Activated CD4-positive, alpha-beta T cell treated with anti-CD3 and anti-CD28 coated beads, Interleukin-2, amount 10 ng/mL, durations not matched to agents 24 days and 14 days (primary cell): ENCODE measurements at regions of chr12 and their contacts with region 1.

Region 1: GRCh38 chr12:2812290-2813213 is at the start of gene ITFG2:
- DNase-seq: peak; percentile 99
- H3K4me3 Mint-ChIP-seq: peak within 1 kb of the TSS; percentile 100
- H3K27ac Mint-ChIP-seq: peak within 1 kb of the TSS; percentile 100
- H3K4me1 Mint-ChIP-seq: peaks cover 21% of the 10 kb centered on the region
- H3K27me3 Mint-ChIP-seq: no peaks in the 10 kb centered on the region
- total RNA-seq, gene ITFG2: 36.5 and 43.8 TPM in 2 replicates

Region 2: DNA sequence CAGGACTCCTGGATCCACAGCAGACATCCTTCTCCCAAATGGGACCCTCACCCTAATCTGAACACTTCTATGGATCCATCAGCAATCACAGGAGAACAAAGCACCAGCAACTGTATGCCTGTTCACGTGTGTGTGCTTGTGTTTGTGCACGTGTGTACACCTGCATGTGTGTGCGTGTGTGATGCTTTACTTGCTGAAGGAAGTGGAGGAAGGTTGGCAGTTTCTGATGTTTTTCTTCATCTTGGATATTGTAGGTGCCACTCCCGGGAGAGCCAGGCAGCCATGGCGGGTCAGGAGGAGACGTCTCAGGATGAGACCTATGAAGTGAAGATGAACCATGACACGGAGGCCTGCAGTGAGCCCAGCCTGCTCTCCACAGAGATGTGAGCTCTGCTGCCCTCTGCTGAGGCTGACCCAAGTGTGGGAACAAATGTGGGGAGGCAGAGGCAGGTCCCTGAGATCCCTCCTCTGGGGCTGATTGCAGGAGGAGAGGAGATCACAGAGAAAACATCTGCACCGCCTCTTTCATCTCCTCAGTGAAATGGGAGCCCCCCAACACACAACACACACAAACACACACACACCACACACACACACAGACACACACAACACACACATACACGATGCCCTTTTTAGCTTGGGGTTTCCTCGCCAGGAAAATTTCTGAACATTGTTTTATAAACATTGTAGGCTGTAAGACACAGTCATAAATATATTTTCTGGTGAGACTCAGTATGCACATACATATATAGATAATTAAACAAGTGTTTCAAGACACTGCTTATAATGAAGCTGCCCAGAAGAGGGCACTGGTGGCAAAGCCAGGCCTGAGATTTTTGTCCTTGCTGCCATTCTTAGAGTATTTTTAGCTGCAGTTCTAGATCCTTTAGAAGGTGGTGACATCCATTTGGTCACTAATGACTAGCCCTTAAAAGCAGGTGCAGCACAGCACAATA is 130.0 kb before region 1 on chr12:
- intact Hi-C with region 1: loop called (anchors 2 kb)
- DNase-seq: peak; percentile 86
- H3K4me3 Mint-ChIP-seq: no peak overlapping the region
- H3K27ac Mint-ChIP-seq: peak overlapping the region; percentile 66
- H3K4me1 Mint-ChIP-seq: peaks cover 2% of the 10 kb centered on the region
- H3K27me3 Mint-ChIP-seq: no peaks in the 10 kb centered on the region

Region 3: GRCh38 chr12:2794736-2795289 is 17.7 kb before region 1 on chr12 and contains the start of gene FKBP4:
- intact Hi-C with region 1: loop called (anchors 1 kb)
- DNase-seq: peak; percentile 97
- H3K4me3 Mint-ChIP-seq: peak within 1 kb of the TSS; percentile 86
- H3K27ac Mint-ChIP-seq: peak within 1 kb of the TSS; percentile 79
- H3K4me1 Mint-ChIP-seq: peaks cover 28% of the 10 kb centered on the region
- H3K27me3 Mint-ChIP-seq: peaks cover 19% of the 10 kb centered on the region
- total RNA-seq, gene FKBP4: 300 and 311 TPM in 2 replicates

Region 4: GRCh38 chr12:2826721-2827515 is 14.4 kb after region 1 on chr12:
- intact Hi-C with region 1: no loop called
- DNase-seq: no peak
- H3K4me3 Mint-ChIP-seq: no peak overlapping the region
- H3K27ac Mint-ChIP-seq: no peak overlapping the region
- H3K4me1 Mint-ChIP-seq: peaks cover 2% of the 10 kb centered on the region
- H3K27me3 Mint-ChIP-seq: no peaks in the 10 kb centered on the region

Region 5: GRCh38 chr12:2877047-2877952 is 64.7 kb after region 1 on chr12 and contains the starts of genes FOXM1 and RHNO1:
- intact Hi-C with region 1: loop called (anchors 1 kb)
- DNase-seq: peak; percentile 97
- H3K4me3 Mint-ChIP-seq: peak within 1 kb of the TSS; percentile 87
- H3K27ac Mint-ChIP-seq: peak within 1 kb of the TSS; percentile 98
- H3K4me1 Mint-ChIP-seq: peaks cover 44% of the 10 kb centered on the region
- H3K27me3 Mint-ChIP-seq: no peaks in the 10 kb centered on the region
- total RNA-seq, gene FOXM1: 73.7 and 74.0 TPM in 2 replicates
- total RNA-seq, gene RHNO1: 47.2 and 48.1 TPM in 2 replicates

Region 6: GRCh38 chr12:3236345-3237187 is 424.0 kb after region 1 on chr12:
- intact Hi-C with region 1: no loop called
- DNase-seq: no peak
- H3K4me3 Mint-ChIP-seq: no peak overlapping the region
- H3K27ac Mint-ChIP-seq: no peak overlapping the region
- H3K4me1 Mint-ChIP-seq: no peaks in the 10 kb centered on the region
- H3K27me3 Mint-ChIP-seq: peaks cover 4% of the 10 kb centered on the region

Region 7: GRCh38 chr12:3483089-3483488 is 670.5 kb after region 1 on chr12:
- intact Hi-C with region 1: no loop called
- DNase-seq: no peak
- H3K4me3 Mint-ChIP-seq: no peak overlapping the region
- H3K27ac Mint-ChIP-seq: no peak overlapping the region
- H3K4me1 Mint-ChIP-seq: no peaks in the 10 kb centered on the region
- H3K27me3 Mint-ChIP-seq: peaks cover 29% of the 10 kb centered on the region